ENCODE measurements at regions of chrX and their contacts with region 1.

Region 1: GRCh38 chrX:129823115-129823514 is 20.6 kb downstream of the ZDHHC9 start:
- DNase-seq: peak; percentile 25 to 70 (median 50)
- H3K4me3 ChIP-seq: no peak overlapping the region
- H3K4me3 Mint-ChIP-seq: peak overlapping the region in 1 of 7 donors; percentile 20
- H3K27ac ChIP-seq: no peak overlapping the region
- H3K27ac Mint-ChIP-seq: peak overlapping the region in 2 of 8 donors; percentile 20 to 73
- H3K4me1 ChIP-seq: peaks cover 7% of the 10 kb centered on the region
- H3K4me1 Mint-ChIP-seq: peaks cover 9 to 20% (median 19%) of the 10 kb centered on the region in 3 donors
- H3K27me3 ChIP-seq: no peaks in the 10 kb centered on the region
- H3K27me3 Mint-ChIP-seq: peaks cover 0 to 8% of the 10 kb centered on the region in 2 donors

Region 2: DNA sequence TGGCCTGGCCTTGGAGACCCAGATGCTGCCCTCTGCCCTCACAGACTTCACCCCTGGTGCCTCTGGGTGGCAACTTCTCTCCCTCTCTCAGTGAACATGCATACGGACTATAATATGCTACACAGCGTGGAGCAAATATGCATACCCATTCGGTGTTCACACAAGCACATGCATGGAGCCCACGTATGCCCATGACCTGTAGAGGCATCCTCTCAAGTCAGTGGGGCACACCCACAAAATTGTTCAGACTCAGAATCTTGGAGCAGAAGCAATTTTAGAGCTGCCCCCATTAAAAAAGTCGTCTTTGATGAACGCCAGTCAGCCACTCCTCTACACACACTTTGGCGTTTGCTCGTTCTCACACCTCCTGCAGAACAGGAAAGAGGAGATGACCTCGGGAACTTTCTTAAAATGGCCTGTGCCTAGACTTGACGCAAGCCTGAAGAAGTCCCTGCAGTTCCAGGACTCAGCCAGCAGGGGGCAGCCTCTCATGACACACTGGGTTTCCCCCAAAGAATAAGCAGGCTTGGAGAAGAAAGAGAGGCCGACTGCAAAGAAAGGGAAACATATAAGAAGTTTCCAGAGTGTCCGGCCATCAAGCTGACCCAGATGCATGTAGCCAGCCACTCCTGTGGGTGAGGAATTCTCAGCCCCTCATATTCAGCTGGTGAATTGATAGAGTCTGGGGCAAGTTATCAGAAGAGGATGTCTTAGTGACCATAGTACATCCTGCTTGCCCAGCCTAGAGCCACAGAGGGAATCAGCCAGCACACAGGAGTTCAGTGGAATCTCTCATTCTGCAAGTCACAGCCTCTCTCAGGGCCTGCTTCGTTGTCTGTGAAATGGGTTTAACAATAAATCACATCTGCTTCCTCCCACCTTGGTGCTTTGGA is 185.7 kb before region 1 on chrX:
- CTCF ChIA-PET with region 1: interaction called, 23 read pairs
- POLR2A ChIA-PET with region 1: no interaction called
- DNase-seq: peak; percentile 58 to 76 (median 61)
- H3K4me3 ChIP-seq: no peak overlapping the region
- H3K4me3 Mint-ChIP-seq: no peak overlapping the region
- H3K27ac ChIP-seq: no peak overlapping the region
- H3K27ac Mint-ChIP-seq: no peak overlapping the region
- H3K4me1 ChIP-seq: no peaks in the 10 kb centered on the region
- H3K4me1 Mint-ChIP-seq: peaks cover 4 to 6% (median 5%) of the 10 kb centered on the region in 3 donors
- H3K27me3 ChIP-seq: no peaks in the 10 kb centered on the region
- H3K27me3 Mint-ChIP-seq: peaks cover 2 to 11% of the 10 kb centered on the region in 2 donors

Region 3: GRCh38 chrX:129945146-129945545 is 122.0 kb after region 1 on chrX:
- CTCF ChIA-PET with region 1: no interaction called
- POLR2A ChIA-PET with region 1: no interaction called
- DNase-seq: no peak
- H3K4me3 ChIP-seq: no peak overlapping the region
- H3K4me3 Mint-ChIP-seq: no peak overlapping the region
- H3K27ac ChIP-seq: no peak overlapping the region
- H3K27ac Mint-ChIP-seq: no peak overlapping the region
- H3K4me1 ChIP-seq: no peaks in the 10 kb centered on the region
- H3K4me1 Mint-ChIP-seq: no peaks in the 10 kb centered on the region
- H3K27me3 ChIP-seq: no peaks in the 10 kb centered on the region
- H3K27me3 Mint-ChIP-seq: peaks cover 0 to 2% of the 10 kb centered on the region in 2 donors

Region 4: GRCh38 chrX:130413415-130413814 is 590.3 kb after region 1 on chrX:
- CTCF ChIA-PET with region 1: no interaction called
- POLR2A ChIA-PET with region 1: no interaction called
- DNase-seq: no peak
- H3K4me3 ChIP-seq: no peak overlapping the region
- H3K4me3 Mint-ChIP-seq: no peak overlapping the region
- H3K27ac ChIP-seq: no peak overlapping the region
- H3K27ac Mint-ChIP-seq: peak overlapping the region in 1 of 8 donors; percentile 7
- H3K4me1 ChIP-seq: no peaks in the 10 kb centered on the region
- H3K4me1 Mint-ChIP-seq: peaks cover 8 to 19% (median 9%) of the 10 kb centered on the region in 3 donors
- H3K27me3 ChIP-seq: no peaks in the 10 kb centered on the region
- H3K27me3 Mint-ChIP-seq: peaks cover 0 to 7% of the 10 kb centered on the region in 2 donors